ENCODE measurements at regions of chr1 and their contacts with region 1.

Region 1: DNA sequence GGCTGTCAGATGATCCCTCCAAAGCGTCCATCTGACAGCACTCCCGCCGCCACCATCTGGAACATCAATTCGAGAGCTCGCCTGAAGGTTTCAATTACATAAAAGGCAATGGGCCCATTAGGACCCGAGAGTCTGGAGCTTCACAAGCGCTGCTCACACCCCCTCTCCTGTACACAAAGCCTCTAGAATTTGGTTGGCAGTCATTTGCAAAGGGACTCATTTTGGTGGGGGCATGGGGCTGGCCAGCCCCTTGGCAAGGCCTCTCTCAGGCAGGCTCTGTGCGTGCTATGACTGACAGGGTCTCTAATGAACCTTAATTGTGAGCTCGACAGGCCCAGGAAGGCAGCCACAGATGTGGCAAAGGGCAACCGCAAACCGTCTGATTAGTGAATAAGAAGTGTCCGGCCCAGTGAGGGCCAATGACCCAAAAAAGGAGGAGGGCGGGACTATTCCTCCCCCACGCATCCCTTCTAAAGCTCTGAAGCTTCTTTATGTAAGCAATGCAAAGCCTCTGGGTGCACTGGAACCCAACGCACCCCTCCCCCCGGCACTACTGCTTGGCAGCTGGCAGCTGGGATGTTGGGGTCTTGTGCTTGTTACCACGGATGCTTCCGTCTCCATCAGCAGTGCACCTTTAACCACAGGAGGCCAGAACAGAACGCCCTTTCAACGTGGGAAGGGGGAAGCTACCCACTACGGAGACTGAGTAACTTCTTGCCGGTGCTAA is 79.4 kb downstream of the CAPZB start:
- DNase-seq: no peak
- H3K4me3 Mint-ChIP-seq: no peak overlapping the region
- H3K27ac Mint-ChIP-seq: no peak overlapping the region
- H3K4me1 Mint-ChIP-seq: peaks cover 44% of the 10 kb centered on the region
- H3K27me3 Mint-ChIP-seq: no peaks in the 10 kb centered on the region

Region 2: GRCh38 chr1:19390901-19391595 is 14.9 kb before region 1 on chr1:
- CTCF ChIA-PET with region 1: interaction called, 21 read pairs
- POLR2A ChIA-PET with region 1: no interaction called
- DNase-seq: peak; percentile 78
- H3K4me3 Mint-ChIP-seq: peak overlapping the region; percentile 75
- H3K27ac Mint-ChIP-seq: peak overlapping the region; percentile 97
- H3K4me1 Mint-ChIP-seq: peaks cover 73% of the 10 kb centered on the region
- H3K27me3 Mint-ChIP-seq: no peaks in the 10 kb centered on the region